Aorta (tissue), 5 donors: ENCODE measurements at regions of chr5 and their contacts with region 1.

Region 1: DNA sequence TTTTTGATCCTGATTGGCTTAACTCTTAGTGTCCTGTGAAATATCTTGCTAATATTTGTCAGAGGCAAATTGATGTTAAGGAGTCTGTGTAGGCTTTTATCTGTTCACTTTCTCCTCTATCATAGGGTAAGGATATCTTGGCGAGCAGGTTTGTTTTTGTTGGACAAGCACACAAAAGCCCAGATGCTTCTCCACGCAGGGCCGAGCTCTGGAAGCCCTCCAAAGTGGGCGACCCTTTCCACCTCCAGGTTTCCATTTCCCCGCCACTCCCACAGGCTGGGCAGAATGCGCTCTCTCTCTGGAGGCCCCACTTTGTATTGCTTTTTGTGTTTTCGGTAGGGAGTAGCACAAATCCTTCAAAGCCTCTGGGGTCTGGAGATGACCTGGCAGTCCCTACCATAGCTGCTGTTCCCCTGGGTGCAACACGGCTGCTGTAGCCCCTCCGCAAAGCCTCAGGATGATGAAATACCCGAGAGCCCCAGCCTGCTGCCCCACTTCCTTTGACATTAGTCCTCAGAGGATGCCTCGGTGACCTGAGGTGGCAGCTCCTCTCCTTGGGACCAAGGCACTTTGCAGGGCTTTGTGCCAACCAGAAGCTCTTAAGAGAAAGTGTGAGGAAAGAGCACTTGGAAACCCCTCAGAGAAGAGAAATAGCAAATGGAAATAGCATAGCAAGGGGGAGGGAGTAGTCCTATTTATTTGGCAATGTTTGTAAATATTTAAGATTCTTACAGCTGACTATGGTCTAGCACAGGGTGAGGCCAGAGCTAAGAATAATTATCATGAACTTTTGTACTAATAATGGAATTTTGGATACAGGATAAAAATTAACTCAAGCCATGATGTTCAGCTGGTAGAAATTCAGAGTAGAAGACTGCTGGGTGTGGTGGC is 122.8 kb downstream of the ARHGEF28 start:
- DNase-seq: peak in 1 of 2 donors; percentile 48
- ATAC-seq: peak; percentile 5
- H3K4me3 ChIP-seq: no peak overlapping the region
- H3K27ac ChIP-seq: peak overlapping the region; percentile 73 to 76
- H3K4me1 ChIP-seq: peaks cover 0 to 11% of the 10 kb centered on the region in 2 donors
- H3K27me3 ChIP-seq: no peaks in the 10 kb centered on the region

Region 2: GRCh38 chr5:73625944-73626811 is 122.6 kb before region 1 on chr5 and contains the start of gene ARHGEF28:
- intact Hi-C with region 1: loop called in 1 of 2 experiments (anchors 5 kb)
- DNase-seq: peak; percentile 76 to 91
- ATAC-seq: peak; percentile 90
- H3K4me3 ChIP-seq: peak within 1 kb of the TSS; percentile 77 to 89
- H3K27ac ChIP-seq: peak within 1 kb of the TSS; percentile 81 to 91
- H3K4me1 ChIP-seq: peaks cover 0 to 3% of the 10 kb centered on the region in 2 donors
- H3K27me3 ChIP-seq: no peaks in the 10 kb centered on the region
- total RNA-seq, gene ARHGEF28: 18.0 to 27.8 TPM

Region 3: DNA sequence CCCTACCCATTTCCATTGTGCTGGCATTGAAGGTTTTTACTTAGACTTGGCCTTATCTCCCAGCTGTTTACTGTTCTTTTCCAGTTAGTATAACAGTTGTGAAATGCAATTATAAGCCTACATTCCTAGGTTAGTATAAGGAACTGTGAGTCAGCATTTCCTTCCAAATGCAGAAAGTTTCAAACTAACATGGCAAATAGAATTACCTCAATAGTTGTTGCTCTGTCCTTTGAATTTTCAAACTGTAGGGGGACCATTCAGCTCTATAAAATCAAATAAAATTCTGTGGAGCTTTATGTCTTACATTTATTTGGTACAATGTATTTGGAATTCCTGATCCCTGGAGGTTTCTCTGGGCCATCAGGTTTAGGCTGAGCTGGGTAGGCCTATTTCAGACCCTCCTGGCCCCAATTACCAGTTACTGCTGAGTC is 75.6 kb before region 1 on chr5:
- intact Hi-C with region 1: loop called in 1 of 2 experiments (anchors 10 kb)
- DNase-seq: no peak
- ATAC-seq: no peak
- H3K4me3 ChIP-seq: no peak overlapping the region
- H3K27ac ChIP-seq: peak overlapping the region; percentile 33 to 57
- H3K4me1 ChIP-seq: peaks cover 8 to 14% of the 10 kb centered on the region in 2 donors
- H3K27me3 ChIP-seq: no peaks in the 10 kb centered on the region

Region 4: GRCh38 chr5:73687357-73687756 is 61.4 kb before region 1 on chr5:
- intact Hi-C with region 1: no loop called
- DNase-seq: no peak
- ATAC-seq: no peak
- H3K4me3 ChIP-seq: no peak overlapping the region
- H3K27ac ChIP-seq: no peak overlapping the region
- H3K4me1 ChIP-seq: no peaks in the 10 kb centered on the region
- H3K27me3 ChIP-seq: no peaks in the 10 kb centered on the region

Region 5: DNA sequence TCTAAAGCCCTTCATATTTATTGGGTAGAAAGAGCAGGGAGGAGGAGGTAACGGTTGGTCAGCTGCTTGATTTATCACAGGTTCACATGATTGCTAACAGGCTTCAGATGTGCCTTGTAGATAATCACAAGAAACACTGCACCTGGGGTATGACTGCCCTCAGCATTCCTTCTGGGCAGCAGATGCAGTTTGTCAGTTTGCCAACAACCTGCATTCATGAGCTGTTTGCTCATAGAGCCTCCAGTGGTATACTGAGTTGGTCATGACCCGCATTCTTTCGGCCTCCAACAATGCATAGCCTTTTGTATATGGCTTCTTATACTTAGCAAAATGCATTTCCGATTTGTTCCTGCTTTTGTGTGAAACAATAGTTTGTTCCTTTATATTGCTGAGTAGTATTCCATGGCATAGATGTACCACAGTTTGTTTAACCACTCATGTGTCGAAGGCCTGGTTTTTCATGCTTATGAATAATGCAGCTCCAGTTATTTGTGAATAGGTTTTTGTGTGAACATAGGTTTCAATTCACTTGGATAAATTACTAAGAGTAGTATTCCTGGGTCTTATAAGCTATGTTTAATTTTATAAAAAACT is 39.1 kb before region 1 on chr5:
- intact Hi-C with region 1: loop called in 1 of 2 experiments (anchors 5 kb)
- DNase-seq: no peak
- ATAC-seq: no peak
- H3K4me3 ChIP-seq: no peak overlapping the region
- H3K27ac ChIP-seq: no peak overlapping the region
- H3K4me1 ChIP-seq: no peaks in the 10 kb centered on the region
- H3K27me3 ChIP-seq: no peaks in the 10 kb centered on the region

Region 6: DNA sequence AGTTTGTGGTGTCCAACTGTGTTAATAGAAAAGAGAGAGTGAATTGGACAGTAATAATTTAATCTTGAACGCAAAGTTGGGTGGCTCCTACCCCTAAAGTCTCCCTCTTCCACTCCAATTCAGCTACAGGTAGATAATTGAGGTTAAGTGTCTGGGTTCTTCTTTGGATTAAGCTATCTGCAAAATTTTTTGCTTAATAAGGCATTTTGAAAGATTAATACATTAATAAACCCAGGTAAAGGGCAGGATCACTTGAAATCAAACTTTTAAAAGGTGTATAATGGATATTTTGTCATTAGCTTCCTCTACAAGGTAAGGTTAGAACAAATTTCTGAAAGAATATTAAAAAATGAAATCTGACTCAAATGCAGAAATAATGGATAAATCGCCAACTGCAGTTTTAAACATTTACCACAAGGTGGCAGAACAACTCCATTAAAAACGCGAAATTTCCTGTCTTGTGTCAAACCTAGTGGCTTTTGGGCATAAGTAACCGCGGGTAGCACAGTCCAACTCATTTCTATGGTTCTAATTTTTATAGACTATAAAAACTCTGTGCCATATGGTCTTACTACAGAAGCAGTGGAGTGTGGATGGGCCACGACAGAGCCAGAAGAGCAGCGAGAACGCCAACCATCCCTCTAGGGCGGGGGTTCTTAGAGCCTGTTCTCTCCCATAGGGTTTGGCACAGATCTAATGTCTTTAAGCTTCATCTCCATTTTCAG is 153.7 kb after region 1 on chr5:
- intact Hi-C with region 1: no loop called
- DNase-seq: no peak
- ATAC-seq: peak; percentile 81
- H3K4me3 ChIP-seq: no peak overlapping the region
- H3K27ac ChIP-seq: no peak overlapping the region
- H3K4me1 ChIP-seq: no peaks in the 10 kb centered on the region
- H3K27me3 ChIP-seq: no peaks in the 10 kb centered on the region